ENCODE measurements at regions of chr3 and their contacts with region 1.

Region 1: DNA sequence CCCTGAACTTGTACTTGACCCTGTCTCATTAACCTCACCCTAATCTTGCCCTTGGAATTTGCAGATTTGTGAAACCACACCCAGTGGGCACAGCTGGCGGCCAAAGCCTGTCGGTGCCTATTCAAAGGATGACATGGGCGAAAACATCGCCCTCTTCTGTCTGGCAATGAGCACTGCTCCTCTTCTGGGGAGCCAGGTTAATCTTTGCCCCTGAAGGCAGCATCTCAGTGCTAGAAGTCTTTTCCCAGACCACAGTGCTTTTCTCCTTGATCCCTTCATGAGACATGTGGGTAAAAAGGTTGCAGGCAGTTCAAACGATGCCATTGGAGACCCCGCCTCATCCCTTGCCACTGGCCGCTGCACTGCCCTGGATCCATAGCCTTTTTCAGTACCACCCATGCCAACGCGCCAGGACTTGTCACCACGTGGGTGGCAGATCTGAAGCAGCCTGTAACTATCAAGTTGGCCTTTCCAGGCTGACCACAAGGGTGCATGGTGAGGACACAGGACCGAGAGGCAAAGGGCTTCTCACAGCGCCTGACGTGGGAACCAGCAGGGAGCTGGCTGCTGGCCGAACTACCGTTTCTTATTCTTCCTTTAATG is 6.5 kb upstream of the DNASE1L3 start:
- DNase-seq: peak; percentile 72
- H3K4me3 ChIP-seq: peak overlapping the region; percentile 6 to 34; a peak in 2 of 4 replicates
- H3K27ac ChIP-seq: no peak overlapping the region; a peak in 1 of 4 replicates
- H3K4me1 ChIP-seq: peaks cover 0 to 5% of the 10 kb centered on the region in 2 experiments; a peak in 1 of 4 replicates
- H3K27me3 ChIP-seq: peaks cover 12% of the 10 kb centered on the region; the same call in 1 of the 2 replicates
- CTCF ChIP-seq: peak; percentile 82
- EP300 ChIP-seq: no peak
- RAD21 ChIP-seq: peak; percentile 68

Region 2: DNA sequence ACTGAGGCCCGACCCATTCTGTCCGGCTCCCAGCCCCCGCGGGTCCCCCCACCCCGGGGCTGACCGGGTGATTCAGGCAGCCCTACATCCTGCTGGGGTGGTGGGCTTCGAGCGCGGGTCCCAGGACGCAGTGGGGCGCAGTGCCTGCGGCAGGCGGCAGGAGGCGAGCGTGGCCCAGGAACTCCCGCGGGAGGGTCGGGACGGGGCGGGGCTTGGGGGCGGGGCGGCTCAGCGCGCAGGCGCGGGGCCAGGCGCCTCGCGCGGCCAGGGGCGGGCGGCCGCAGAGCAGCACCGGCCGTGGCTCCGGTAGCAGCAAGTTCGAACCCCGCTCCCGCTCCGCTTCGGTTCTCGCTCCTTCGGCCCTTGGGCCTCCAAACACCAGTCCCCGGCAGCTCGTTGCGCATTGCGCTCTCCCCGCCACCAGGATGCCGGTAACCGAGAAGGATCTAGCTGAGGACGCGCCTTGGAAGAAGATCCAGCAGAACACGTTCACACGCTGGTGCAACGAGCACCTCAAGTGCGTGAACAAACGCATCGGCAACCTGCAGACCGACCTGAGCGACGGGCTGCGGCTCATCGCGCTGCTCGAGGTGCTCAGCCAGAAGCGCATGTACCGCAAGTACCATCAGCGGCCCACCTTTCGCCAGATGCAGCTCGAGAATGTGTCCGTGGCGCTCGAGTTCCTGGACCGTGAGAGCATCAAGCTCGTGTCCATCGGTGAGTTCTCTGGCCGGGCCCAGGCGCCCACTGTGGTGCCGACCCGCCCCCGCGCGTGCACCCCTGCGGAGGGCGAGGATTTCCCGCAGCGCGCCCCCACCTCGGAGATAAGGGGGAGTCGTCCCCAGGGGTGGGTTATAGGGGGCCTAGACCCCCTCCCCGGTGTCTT is 208.9 kb before region 1 on chr3 and contains the start of gene FLNB:
- CTCF ChIA-PET with region 1: interaction called, 10 read pairs
- POLR2A ChIA-PET with region 1: no interaction called
- DNase-seq: peak; percentile 99
- H3K4me3 ChIP-seq: peak within 1 kb of the TSS; percentile 86 to 100
- H3K27ac ChIP-seq: peak within 1 kb of the TSS; percentile 62 to 85
- H3K4me1 ChIP-seq: peaks cover 10 to 33% of the 10 kb centered on the region in 2 experiments; a peak in 3 of 4 replicates
- H3K27me3 ChIP-seq: no peaks in the 10 kb centered on the region
- CTCF ChIP-seq: peak; percentile 68
- EP300 ChIP-seq: no peak
- RAD21 ChIP-seq: peak; percentile 76
- polyA plus RNA-seq, gene FLNB: 115 and 127 TPM in 2 replicates

Region 3: DNA sequence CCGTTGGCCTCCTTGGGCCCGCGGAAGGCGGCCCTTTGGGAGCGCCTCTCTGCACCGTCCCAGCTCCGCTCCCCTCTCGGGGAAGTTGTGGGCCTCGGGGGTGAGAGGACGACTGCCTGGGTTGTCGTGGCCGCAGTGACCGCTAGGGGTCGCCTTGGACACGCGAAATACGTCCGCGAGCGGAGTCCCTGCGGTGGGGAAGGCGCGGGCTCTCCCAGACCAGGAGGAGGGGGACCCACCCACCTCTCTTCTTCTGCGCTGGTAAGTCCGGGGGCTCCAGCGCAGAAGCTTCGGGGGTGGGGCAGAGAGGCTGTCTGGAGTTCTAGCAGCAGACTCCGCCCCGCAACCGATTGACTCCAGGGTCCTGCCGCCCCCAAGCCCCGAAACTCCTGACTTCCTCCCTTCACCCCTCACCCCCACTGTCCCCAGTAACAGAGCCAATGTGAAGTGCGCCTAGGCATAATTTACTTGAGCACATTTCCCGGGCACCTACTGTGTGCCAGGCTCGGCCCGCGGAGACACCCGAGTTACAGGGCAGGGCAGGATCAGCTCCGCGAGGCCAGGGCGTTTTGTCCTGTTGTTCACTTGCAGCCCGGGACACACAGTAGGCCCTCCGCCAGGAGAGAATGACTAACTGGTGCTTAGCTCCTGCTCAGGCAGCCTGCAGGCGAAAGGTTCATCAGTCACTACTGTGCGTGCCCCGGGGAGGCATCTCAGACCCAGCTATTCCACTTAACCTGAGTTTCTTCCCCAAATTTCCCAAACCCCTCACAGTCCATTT is 39.4 kb before region 1 on chr3:
- CTCF ChIA-PET with region 1: interaction called, 65 read pairs
- POLR2A ChIA-PET with region 1: no interaction called
- DNase-seq: peak; percentile 93
- H3K4me3 ChIP-seq: peak overlapping the region; percentile 41 to 56
- H3K27ac ChIP-seq: no peak overlapping the region
- H3K4me1 ChIP-seq: peaks cover 0 to 4% of the 10 kb centered on the region in 2 experiments; a peak in 1 of 4 replicates
- H3K27me3 ChIP-seq: no peaks in the 10 kb centered on the region
- CTCF ChIP-seq: peak; percentile 89
- EP300 ChIP-seq: no peak
- RAD21 ChIP-seq: peak; percentile 78

Region 4: GRCh38 chr3:58200846-58201355 is 16.4 kb before region 1 on chr3:
- CTCF ChIA-PET with region 1: interaction called, 19 read pairs
- POLR2A ChIA-PET with region 1: no interaction called
- DNase-seq: no peak
- H3K4me3 ChIP-seq: no peak overlapping the region
- H3K27ac ChIP-seq: no peak overlapping the region
- H3K4me1 ChIP-seq: no peaks in the 10 kb centered on the region
- H3K27me3 ChIP-seq: no peaks in the 10 kb centered on the region
- CTCF ChIP-seq: no peak
- EP300 ChIP-seq: no peak
- RAD21 ChIP-seq: no peak

Region 5: DNA sequence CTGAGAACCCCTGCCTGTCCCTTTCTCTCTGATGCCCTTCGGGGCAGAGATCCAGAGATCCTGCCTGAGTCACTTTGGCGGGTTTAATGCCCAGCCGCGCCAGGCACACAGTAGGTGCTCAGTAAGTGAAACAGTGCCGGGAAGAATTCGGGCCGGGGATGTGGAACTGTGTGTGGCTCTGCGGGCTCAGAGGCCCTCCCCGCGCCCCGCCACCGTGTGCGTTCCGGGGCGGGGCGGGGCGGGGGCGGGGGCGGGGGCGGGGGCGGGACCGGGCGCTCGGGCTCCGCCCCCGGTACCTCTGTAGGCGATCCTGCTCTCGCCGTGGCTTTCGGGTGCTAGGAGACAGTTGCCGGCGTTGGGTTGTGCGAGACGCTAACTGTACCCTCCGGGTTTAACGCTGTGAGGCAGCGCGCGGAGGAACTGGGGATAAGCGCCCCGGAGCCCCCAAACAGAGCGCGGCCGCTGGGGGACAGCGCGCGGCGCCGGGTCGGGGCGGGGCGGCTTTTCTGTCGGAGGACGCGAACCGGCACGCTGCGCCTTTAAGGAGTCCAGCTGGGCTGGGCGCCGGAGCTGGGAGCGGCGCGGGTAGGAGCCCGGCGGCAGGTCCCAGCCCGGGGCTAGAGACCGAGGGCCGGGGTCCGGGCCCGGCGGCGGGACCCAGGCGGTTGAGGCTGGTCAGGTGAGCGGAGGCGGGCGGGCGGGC is 20.1 kb after region 1 on chr3 and contains the start of gene ABHD6:
- CTCF ChIA-PET with region 1: interaction called, 29 read pairs
- POLR2A ChIA-PET with region 1: no interaction called
- DNase-seq: peak; percentile 94
- H3K4me3 ChIP-seq: peak within 1 kb of the TSS; percentile 79 to 86
- H3K27ac ChIP-seq: peak within 1 kb of the TSS; percentile 50 to 65; a peak in 3 of 4 replicates
- H3K4me1 ChIP-seq: peaks cover 0 to 13% of the 10 kb centered on the region in 2 experiments; a peak in 1 of 4 replicates
- H3K27me3 ChIP-seq: no peaks in the 10 kb centered on the region
- CTCF ChIP-seq: peak; percentile 56
- EP300 ChIP-seq: no peak
- RAD21 ChIP-seq: peak; percentile 58
- polyA plus RNA-seq, gene ABHD6: 10.7 and 14.8 TPM in 2 replicates